Activated naive CD4-positive, alpha-beta T cell treated with anti-CD3 and anti-CD28 coated beads, Interleukin-2, amount 10 ng/mL, durations not matched to agents 7 days and 5 days (primary cell): ENCODE measurements at regions of chr9 and their contacts with region 1.

Region 1: DNA sequence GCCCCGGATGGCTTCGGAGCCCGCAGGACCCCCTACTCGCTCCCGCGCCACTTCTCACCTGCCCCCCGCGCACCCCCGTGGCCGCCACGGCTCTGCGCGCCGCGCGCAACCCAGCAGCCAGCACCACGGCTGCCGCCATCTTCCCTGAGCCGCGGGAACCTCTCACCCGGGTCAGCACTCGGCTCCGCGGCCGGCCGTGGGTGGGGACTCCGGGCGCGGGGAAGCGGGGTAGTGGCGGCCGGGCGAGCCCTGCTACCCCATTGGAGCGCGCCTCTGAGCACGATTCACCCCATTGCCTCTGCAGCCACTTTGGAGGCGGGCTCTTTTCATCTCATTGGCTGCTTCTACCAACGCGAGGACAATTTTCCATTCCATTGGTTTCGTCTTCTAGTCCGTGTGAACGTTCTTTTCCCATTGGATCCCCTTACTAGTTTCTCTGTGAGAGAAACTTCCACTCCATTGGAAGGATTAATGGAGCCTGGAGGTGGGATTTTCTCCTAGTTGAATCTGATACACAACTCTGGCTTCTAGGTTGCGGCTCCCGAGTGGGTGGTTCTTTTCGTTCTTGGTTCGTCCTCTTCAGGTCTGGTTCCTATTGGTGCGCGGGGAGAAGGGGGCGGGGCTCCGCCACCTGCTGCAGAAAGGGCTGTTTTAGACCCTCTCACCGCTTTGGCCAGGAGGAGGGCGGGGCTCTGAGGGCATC is at the start of gene HINT2:
- DNase-seq: peak; percentile 100
- H3K4me3 Mint-ChIP-seq: peak within 1 kb of the TSS; percentile 83
- H3K27ac Mint-ChIP-seq: peak within 1 kb of the TSS; percentile 97
- H3K4me1 Mint-ChIP-seq: peaks cover 47% of the 10 kb centered on the region
- H3K27me3 Mint-ChIP-seq: peaks cover 31% of the 10 kb centered on the region

Region 2: DNA sequence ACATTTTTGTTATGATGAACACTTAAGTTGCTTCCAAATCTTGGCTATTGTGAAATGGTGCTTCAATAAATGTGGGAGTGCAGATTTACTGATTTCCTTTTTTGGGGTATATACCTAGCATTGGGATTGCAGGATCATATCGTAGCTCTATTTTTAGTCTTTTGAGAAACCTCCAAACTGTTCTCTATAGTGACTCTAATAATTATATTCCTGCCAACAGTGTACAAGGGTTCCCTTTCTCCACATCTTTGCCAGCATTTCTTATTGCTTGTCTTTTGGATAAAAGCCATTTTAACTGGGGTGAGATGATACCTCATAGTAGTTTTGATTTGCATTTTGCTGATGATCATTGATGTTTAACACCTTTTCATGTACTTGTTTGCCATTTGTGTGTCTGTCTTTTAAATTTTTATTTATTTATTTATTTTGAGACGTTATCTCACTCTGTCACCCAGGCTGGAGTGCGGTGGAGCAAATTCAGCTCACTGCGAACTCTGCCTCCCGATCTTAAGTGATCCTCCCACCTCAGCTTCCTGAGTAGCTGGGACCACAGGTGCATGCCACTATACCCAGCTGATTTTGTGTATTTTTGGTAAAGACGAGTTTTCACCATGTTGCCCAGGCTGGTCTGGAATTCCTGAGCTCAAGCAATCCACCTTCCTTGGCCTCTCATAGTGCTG is 594.2 kb before region 1 on chr9:
- CTCF ChIA-PET with region 1: no interaction called
- DNase-seq: no peak
- H3K4me3 Mint-ChIP-seq: no peak overlapping the region
- H3K27ac Mint-ChIP-seq: no peak overlapping the region
- H3K4me1 Mint-ChIP-seq: no peaks in the 10 kb centered on the region
- H3K27me3 Mint-ChIP-seq: no peaks in the 10 kb centered on the region

Region 3: DNA sequence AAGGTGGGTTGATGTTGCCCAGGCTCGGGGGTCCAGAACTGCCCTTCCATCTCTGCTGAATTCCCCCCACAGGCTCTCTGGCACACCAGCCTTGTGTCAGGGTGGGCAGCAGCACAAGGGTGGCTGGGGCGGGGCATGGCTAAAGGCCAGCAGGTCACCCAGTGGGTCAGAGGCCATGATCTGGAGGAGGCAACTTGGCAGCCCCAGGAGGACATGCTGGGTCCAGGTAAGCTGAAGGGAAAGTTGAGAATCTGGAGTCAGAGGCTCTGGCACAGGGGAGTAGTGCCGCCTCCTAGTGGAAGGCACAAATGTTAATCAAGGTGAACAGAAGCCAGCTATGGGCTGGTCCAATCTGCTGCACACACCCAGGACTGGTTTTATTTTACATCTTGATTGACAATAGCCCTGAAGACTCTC is 20.2 kb after region 1 on chr9:
- CTCF ChIA-PET with region 1: interaction called, 14 read pairs
- DNase-seq: peak; percentile 52
- H3K4me3 Mint-ChIP-seq: no peak overlapping the region
- H3K27ac Mint-ChIP-seq: no peak overlapping the region
- H3K4me1 Mint-ChIP-seq: peaks cover 10% of the 10 kb centered on the region
- H3K27me3 Mint-ChIP-seq: peaks cover 19% of the 10 kb centered on the region

Region 4: DNA sequence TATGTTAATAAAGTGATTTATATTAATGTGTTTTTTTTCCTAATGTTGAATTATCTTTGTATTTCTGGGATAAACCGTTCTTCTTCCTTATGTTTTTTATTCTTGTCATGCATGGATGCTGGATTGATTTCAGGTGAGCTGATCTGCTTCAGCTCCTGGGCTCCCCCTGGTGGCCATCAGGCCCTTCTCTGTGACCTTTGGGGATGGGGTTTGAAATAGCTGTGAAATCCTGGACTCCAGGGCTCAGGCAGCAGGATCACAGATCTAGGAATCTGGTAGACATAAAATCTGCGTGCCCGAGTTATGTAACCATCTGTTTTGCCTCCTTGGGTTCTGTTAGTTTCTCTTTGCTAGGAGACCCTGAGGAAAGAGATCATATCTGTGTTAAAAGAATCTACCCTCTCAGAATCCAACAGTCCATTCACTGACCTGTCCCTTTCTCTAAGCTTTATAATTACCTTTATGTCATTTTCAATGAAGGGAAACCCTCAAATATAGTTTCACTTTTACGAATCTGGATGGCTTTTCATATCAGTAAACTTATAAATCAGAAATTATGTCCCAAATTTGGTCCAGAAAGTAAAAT is 67.4 kb after region 1 on chr9:
- CTCF ChIA-PET with region 1: interaction called, 11 read pairs
- DNase-seq: peak; percentile 85
- H3K4me3 Mint-ChIP-seq: no peak overlapping the region
- H3K27ac Mint-ChIP-seq: no peak overlapping the region
- H3K4me1 Mint-ChIP-seq: no peaks in the 10 kb centered on the region
- H3K27me3 Mint-ChIP-seq: peaks cover 41% of the 10 kb centered on the region